ENCODE measurements at regions of chr4 and their contacts with region 1.

Region 1: DNA sequence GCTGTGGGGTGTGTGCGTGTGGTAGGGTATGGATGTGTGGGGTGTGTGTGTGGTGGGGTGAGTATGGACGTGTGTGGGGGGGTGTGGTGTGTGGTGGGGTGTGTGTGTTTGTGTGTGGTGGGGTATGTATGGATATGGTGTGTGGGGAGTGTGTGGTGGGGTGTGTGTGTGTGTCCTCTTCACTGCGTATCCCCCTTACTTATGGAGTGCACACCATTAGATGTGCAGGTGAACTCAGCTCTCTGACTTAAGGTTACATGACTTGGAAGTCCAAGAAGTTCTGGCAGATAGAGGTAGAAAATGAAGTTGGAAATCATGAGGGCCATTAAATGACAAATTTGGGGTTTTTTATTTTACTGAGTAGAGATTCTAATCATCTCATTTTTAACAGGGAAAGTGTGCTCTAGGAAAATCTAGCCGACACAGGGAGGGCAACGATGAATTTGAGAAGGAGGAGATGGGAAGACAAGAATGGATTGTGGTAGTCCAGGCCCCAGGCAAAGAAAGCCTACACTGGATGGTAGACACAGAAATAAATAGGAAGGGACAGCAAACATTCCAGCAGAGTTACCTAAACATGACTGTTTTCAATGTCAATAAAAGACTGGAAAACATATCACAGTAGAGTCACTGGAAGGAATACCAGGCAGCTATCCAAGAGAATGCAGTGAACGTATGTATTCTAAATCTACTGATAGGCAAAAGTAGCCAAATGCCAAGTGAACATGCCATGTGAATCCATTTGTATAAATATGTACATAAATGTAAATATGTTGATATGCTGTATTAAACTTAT is 182.7 kb downstream of the PALLD start:
- DNase-seq: no peak

Region 2: DNA sequence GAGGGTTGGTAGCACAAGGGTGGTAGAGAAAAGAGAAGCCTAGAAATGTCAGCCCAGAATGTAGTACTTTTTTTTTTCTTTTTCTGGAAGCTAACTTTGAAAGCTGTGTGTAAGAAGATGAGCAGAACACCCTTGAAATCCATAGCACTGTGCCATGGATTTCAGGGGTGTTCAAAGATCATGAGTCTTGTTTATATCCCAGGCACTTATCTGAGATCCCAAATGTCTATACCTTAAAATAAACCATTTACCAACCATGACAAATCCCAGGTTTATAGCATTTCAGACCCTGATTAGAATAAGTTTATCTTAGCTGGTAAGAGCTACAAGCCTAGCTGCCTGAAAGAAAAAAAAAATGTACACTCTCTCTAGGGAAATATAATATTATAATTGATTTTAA is 977.2 kb before region 1 on chr4:
- intact Hi-C with region 1: loop called in 1 of 2 experiments (anchors 5 kb)
- DNase-seq: no peak

Region 3: GRCh38 chr4:168537571-168537970 is 142.0 kb before region 1 on chr4:
- intact Hi-C with region 1: no loop called
- DNase-seq: no peak